Endothelial cell of umbilical vein (primary cell): ENCODE measurements at regions of chr16 and their contacts with region 1.

Region 1: DNA sequence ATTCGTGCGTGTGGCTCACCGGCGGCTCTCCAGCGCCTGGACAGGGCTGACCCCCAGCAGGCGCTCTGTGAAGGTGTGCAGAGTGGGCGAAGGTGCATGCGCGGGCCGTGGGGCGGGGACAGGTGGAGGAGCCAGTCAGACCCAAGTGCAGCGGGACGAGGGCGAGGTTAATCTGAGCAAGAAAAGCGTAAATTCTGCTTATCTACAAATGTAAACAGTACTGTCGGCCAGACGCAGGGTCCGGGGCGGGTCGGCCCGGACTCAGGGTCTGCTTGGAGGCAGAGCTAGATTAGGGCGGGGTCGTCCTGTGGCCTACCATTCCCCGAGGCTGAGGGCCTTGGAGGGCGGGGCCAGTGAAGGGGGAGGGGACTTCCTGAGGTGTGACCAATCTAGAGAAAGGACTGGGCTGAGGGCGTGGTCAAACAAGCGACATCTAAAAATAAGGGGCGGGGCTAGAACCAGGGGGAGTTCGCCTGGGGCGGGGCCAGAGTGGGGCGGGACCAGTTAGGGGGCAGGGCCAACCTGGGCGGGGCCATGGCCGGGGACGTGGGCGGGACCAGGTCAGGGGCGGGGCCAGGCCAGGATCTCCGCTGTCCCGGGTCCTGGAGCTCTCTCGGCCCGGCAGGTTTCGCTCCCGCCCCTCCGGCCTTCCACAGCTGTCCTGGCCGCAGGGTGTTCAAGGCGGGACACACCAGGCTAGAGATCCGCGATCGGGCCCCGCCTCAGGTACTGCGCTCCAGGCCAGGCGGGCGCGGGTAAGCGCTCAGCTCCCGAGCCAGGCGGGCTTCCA is at the start of gene SEC14L5:
- DNase-seq: peak; percentile 98
- H3K4me3 ChIP-seq: peak within 1 kb of the TSS; percentile 40 to 73 (median 65)
- H3K27ac ChIP-seq: no peak within 1 kb of the TSS
- H3K4me1 ChIP-seq: peaks cover 5% of the 10 kb centered on the region
- H3K27me3 ChIP-seq: peaks cover 0 to 2% of the 10 kb centered on the region in 2 experiments
- CTCF ChIP-seq: no peak
- POLR2A ChIP-seq: no peak
- total RNA-seq, gene SEC14L5: not detected in 2 replicates

Region 2: GRCh38 chr16:4693296-4693955 is 264.5 kb before region 1 on chr16 and contains the start of gene NUDT16L1:
- CTCF ChIA-PET with region 1: interaction called, 3 read pairs
- POLR2A ChIA-PET with region 1: no interaction called
- dilution Hi-C with region 1: no loop called
- intact Hi-C with region 1: loop called (anchors 2 kb)
- DNase-seq: peak; percentile 98
- H3K4me3 ChIP-seq: peak within 1 kb of the TSS; percentile 66 to 93 (median 79)
- H3K27ac ChIP-seq: peak within 1 kb of the TSS; percentile 32
- H3K4me1 ChIP-seq: peaks cover 4% of the 10 kb centered on the region
- H3K27me3 ChIP-seq: no peaks in the 10 kb centered on the region
- CTCF ChIP-seq: peak in 1 of 2 donors; percentile 19
- POLR2A ChIP-seq: peak; percentile 78
- total RNA-seq, gene NUDT16L1: 22.8 and 24.7 TPM in 2 replicates

Region 3: GRCh38 chr16:4734063-4734729 is 223.7 kb before region 1 on chr16 and contains the starts of genes ANKS3 and DNAAF8:
- CTCF ChIA-PET with region 1: interaction called, 4 read pairs
- POLR2A ChIA-PET with region 1: no interaction called
- dilution Hi-C with region 1: no loop called
- intact Hi-C with region 1: loop called (anchors 1 kb)
- DNase-seq: peak; percentile 96
- H3K4me3 ChIP-seq: peak within 1 kb of the TSS; percentile 62 to 100 (median 76)
- H3K27ac ChIP-seq: peak within 1 kb of the TSS; percentile 46
- H3K4me1 ChIP-seq: peaks cover 5% of the 10 kb centered on the region
- H3K27me3 ChIP-seq: no peaks in the 10 kb centered on the region
- CTCF ChIP-seq: no peak
- POLR2A ChIP-seq: peak; percentile 45
- total RNA-seq, gene ANKS3: 22.5 and 24.0 TPM in 2 replicates
- total RNA-seq, gene DNAAF8: 1.0 TPM in 1 of 2 replicates, not detected in the other

Region 4: DNA sequence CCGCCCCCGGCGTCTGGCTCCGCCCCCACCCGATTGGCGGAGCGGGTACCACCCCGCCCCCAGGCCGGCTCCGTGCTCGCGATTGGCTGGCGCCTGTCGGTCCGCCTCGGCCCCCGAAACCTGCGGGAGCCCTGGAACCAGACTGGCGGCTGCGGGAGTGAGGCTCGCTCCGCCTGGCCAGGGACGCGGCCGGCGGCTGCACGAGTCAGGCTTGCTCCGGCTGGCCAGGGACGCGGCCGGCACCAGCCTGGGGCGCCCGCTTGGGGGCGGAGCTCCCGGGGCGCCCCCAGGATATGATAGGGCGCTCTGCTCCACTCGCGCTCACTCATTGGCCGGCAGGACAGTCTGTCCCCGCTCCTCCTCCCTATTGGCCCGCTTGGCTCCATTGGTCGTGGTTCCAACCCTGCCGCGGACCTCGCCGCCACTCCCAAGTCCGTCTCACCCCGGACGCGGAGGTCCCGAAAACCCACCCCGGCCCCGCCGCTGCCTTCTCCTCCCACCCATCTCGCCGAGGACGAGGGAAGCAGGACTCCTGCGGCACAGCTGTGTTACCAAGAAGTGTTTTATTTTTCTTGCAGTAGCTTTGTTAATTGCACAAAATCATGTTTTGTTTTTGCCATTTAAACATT is 155.1 kb before region 1 on chr16:
- CTCF ChIA-PET with region 1: interaction called, 3 read pairs
- POLR2A ChIA-PET with region 1: no interaction called
- dilution Hi-C with region 1: no loop called
- intact Hi-C with region 1: loop called (anchors 2 kb)
- DNase-seq: peak; percentile 91
- H3K4me3 ChIP-seq: peak overlapping the region; percentile 59 to 76 (median 75)
- H3K27ac ChIP-seq: no peak overlapping the region
- H3K4me1 ChIP-seq: peaks cover 7% of the 10 kb centered on the region
- H3K27me3 ChIP-seq: no peaks in the 10 kb centered on the region
- CTCF ChIP-seq: no peak
- POLR2A ChIP-seq: peak; percentile 26

Region 5: DNA sequence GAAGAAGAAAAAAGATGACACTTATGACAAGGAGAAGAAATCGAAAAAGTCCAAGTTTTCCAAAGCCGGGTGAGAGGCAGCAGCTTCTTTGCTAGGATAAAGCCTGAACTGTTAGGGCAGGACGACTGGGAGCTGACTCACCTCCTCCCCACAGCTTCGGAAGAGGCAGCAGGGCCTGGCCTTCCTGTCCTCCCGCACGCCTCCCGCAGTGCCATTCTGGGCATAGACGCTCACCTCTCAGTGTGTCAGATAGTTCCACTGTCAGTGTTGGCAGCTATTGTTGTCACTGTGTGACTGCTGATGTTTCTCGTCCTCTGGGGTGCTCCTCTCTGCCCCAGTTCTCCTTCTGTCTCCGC is 98.0 kb before region 1 on chr16:
- CTCF ChIA-PET with region 1: interaction called, 13 read pairs
- POLR2A ChIA-PET with region 1: no interaction called
- dilution Hi-C with region 1: no loop called
- intact Hi-C with region 1: no loop called
- DNase-seq: no peak
- H3K4me3 ChIP-seq: peak overlapping the region in 1 of 3 experiments; percentile 0
- H3K27ac ChIP-seq: peak overlapping the region; percentile 86
- H3K4me1 ChIP-seq: peaks cover 26% of the 10 kb centered on the region
- H3K27me3 ChIP-seq: no peaks in the 10 kb centered on the region
- CTCF ChIP-seq: no peak
- POLR2A ChIP-seq: peak; percentile 24

Region 6: DNA sequence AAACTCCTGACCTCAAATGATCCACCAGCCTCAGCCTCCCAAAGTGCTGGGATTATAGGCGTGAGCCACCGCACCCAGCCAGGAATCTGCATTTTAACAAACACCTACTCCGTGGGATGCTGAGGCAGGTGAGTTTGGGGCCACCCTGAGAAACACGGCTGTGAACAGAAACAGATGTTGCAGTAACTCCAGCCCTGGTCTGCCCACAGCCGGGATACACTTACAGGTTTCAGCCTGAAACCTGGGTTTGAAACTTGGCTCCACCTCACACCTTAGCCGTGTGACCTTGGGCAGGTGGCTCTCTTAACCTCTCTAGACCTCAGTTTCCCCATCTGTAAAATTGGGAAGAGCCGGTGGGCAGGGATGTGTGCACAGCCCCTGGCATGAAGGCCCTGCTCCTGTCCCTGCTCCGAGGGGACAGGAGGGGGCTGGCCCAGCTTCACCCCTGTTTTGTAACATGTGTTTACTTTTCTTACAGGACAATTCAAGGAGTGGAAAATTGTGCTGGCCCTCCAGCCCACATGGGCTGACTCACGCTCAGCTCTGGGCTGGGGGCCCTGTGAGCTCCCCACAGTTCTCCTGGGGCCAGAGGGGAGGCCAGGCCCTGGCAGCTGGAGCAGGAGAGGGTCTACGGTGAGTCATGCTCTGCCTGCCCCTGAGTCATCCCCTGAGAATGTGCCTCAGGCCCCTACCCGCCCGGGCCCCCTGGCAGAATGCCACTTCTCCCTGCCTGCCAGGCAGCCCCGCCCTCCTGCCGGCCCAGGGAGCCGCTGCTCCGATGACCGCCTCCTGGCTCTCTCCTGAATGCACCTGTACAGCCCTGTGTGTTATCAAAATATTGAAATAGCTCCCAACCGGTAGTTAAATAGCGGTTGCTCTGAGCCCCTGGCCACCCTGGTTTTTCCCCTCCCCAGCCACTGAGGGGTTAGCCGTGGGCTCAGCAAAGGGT is 13.3 kb before region 1 on chr16:
- CTCF ChIA-PET with region 1: interaction called, 5 read pairs
- POLR2A ChIA-PET with region 1: no interaction called
- dilution Hi-C with region 1: no loop called
- intact Hi-C with region 1: loop called (anchors 1 kb)
- DNase-seq: peak; percentile 98
- H3K4me3 ChIP-seq: no peak overlapping the region
- H3K27ac ChIP-seq: peak overlapping the region; percentile 90
- H3K4me1 ChIP-seq: peaks cover 33% of the 10 kb centered on the region
- H3K27me3 ChIP-seq: no peaks in the 10 kb centered on the region
- CTCF ChIP-seq: no peak
- POLR2A ChIP-seq: no peak

Region 7: GRCh38 chr16:5354645-5355044 is 396.7 kb after region 1 on chr16:
- CTCF ChIA-PET with region 1: no interaction called
- POLR2A ChIA-PET with region 1: no interaction called
- dilution Hi-C with region 1: no loop called
- intact Hi-C with region 1: no loop called
- DNase-seq: no peak
- H3K4me3 ChIP-seq: no peak overlapping the region
- H3K27ac ChIP-seq: no peak overlapping the region
- H3K4me1 ChIP-seq: no peaks in the 10 kb centered on the region
- H3K27me3 ChIP-seq: no peaks in the 10 kb centered on the region
- CTCF ChIP-seq: no peak
- POLR2A ChIP-seq: no peak